Activated T-helper 1 cell treated with anti-CD3 and anti-CD28 coated beads, Interleukin-12 subunit alpha, Interleukin-12 subunit beta, Interleukin-2, Interleukin-4 antibody, amounts not matched to agents 30 ng/mL and 10 ng/mL and 1 ng/mL, durations not matched to agents 14 hours and 24 hours and 36 hours (primary cell): ENCODE measurements at regions of chr3 and their contacts with region 1.

Region 1: GRCh38 chr3:187025656-187026316 is 95.5 kb downstream of the ST6GAL1 start:
- DNase-seq: no peak
- H3K4me3 Mint-ChIP-seq: peak overlapping the region; percentile 85
- H3K27ac Mint-ChIP-seq: peak overlapping the region; percentile 97
- H3K4me1 Mint-ChIP-seq: peaks cover 59% of the 10 kb centered on the region
- H3K27me3 Mint-ChIP-seq: no peaks in the 10 kb centered on the region

Region 2: GRCh38 chr3:186330772-186331460 is 694.9 kb before region 1 on chr3:
- intact Hi-C with region 1: no loop called
- DNase-seq: no peak
- H3K4me3 Mint-ChIP-seq: no peak overlapping the region
- H3K27ac Mint-ChIP-seq: no peak overlapping the region
- H3K4me1 Mint-ChIP-seq: no peaks in the 10 kb centered on the region
- H3K27me3 Mint-ChIP-seq: peaks cover 12% of the 10 kb centered on the region

Region 3: GRCh38 chr3:186849374-186849975 is 176.3 kb before region 1 on chr3:
- intact Hi-C with region 1: loop called (anchors 1 kb)
- DNase-seq: no peak
- H3K4me3 Mint-ChIP-seq: no peak overlapping the region
- H3K27ac Mint-ChIP-seq: no peak overlapping the region
- H3K4me1 Mint-ChIP-seq: peaks cover 26% of the 10 kb centered on the region
- H3K27me3 Mint-ChIP-seq: peaks cover 13% of the 10 kb centered on the region

Region 4: DNA sequence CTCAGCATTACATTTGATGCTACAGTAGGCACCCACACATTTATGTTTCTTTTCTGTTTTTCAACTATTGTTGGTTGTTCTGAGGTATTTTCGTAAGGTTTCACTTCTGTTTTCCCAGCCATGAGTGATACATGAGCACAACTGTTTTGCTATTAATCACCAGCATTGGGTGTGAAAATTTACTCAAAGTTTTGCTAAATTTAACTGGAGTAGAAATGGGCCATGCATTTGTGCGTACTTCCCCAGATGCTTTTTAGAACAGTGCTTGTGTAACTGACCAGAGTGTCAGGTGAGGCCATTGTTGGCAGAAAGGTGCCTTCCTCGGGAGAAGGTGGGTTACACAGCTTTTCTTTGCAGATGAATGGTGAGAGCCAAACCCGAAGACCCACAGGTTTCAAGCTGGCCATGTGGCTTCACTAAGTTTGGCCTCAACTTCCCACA is 25.1 kb before region 1 on chr3:
- intact Hi-C with region 1: loop called (anchors 1 kb)
- DNase-seq: peak; percentile 29
- H3K4me3 Mint-ChIP-seq: peak overlapping the region; percentile 30
- H3K27ac Mint-ChIP-seq: peak overlapping the region; percentile 90
- H3K4me1 Mint-ChIP-seq: peaks cover 86% of the 10 kb centered on the region
- H3K27me3 Mint-ChIP-seq: no peaks in the 10 kb centered on the region

Region 5: GRCh38 chr3:187012609-187013051 is 13.2 kb before region 1 on chr3:
- intact Hi-C with region 1: loop called (anchors 1 kb)
- DNase-seq: peak; percentile 49
- H3K4me3 Mint-ChIP-seq: peak overlapping the region; percentile 55
- H3K27ac Mint-ChIP-seq: peak overlapping the region; percentile 91
- H3K4me1 Mint-ChIP-seq: peaks cover 54% of the 10 kb centered on the region
- H3K27me3 Mint-ChIP-seq: no peaks in the 10 kb centered on the region

Region 6: GRCh38 chr3:187066228-187066995 is 40.6 kb after region 1 on chr3:
- intact Hi-C with region 1: loop called (anchors 2 kb)
- DNase-seq: peak; percentile 29
- H3K4me3 Mint-ChIP-seq: no peak overlapping the region
- H3K27ac Mint-ChIP-seq: peak overlapping the region; percentile 67
- H3K4me1 Mint-ChIP-seq: peaks cover 55% of the 10 kb centered on the region
- H3K27me3 Mint-ChIP-seq: no peaks in the 10 kb centered on the region